Dorsolateral prefrontal cortex (tissue), 120 donors: ENCODE measurements at regions of chr1 and their contacts with region 1.

Region 1: DNA sequence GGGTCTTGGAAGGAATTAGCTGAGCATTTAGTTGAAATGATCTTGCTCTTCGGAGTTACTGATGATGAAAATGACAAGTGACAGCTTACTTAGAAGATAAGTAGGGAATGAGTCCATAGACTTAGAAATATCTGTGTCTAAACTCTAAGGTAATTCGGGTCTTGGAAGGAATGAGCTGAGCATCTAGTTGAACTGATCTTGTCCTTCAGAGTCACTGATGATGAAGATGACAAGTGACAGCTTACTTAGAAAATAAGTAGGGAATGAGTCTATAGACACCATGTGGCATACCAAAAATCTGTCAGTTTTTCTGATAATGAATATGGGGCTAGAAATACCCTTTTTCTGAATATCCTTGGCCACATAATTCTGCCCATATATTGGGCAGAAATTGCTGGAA is 14.7 kb downstream of the CTTNBP2NL start:
- DNase-seq: no peak
- H3K4me3 ChIP-seq: no peak overlapping the region
- H3K27ac ChIP-seq: no peak overlapping the region
- H3K27me3 ChIP-seq: no peaks in the 10 kb centered on the region
- CTCF ChIP-seq: no peak

Region 2: GRCh38 chr1:112454316-112454715 is 43.6 kb after region 1 on chr1:
- intact Hi-C with region 1: loop called in 1 of 2 experiments (anchors 5 kb)
- DNase-seq: no peak
- H3K4me3 ChIP-seq: no peak overlapping the region
- H3K27ac ChIP-seq: no peak overlapping the region
- H3K27me3 ChIP-seq: no peaks in the 10 kb centered on the region
- CTCF ChIP-seq: no peak